Calu3 (cell line): ENCODE measurements at regions of chr18 and their contacts with region 1.

Region 1: GRCh38 chr18:61606759-61607158 is 273.5 kb downstream of the CDH20 start:
- DNase-seq: peak; percentile 49
- H3K4me3 Mint-ChIP-seq: no peak overlapping the region
- H3K27ac Mint-ChIP-seq: peak overlapping the region; percentile 2
- H3K4me1 Mint-ChIP-seq: peaks cover 9% of the 10 kb centered on the region
- H3K27me3 Mint-ChIP-seq: no peaks in the 10 kb centered on the region
- CTCF ChIP-seq: no peak

Region 2: GRCh38 chr18:61336766-61337165 is 270.0 kb before region 1 on chr18:
- CTCF ChIA-PET with region 1: no interaction called
- intact Hi-C with region 1: no loop called
- DNase-seq: no peak
- H3K4me3 Mint-ChIP-seq: no peak overlapping the region
- H3K27ac Mint-ChIP-seq: no peak overlapping the region
- H3K4me1 Mint-ChIP-seq: no peaks in the 10 kb centered on the region
- H3K27me3 Mint-ChIP-seq: peaks cover 14% of the 10 kb centered on the region
- CTCF ChIP-seq: no peak

Region 3: GRCh38 chr18:61551586-61551985 is 55.2 kb before region 1 on chr18:
- CTCF ChIA-PET with region 1: no interaction called
- intact Hi-C with region 1: no loop called
- DNase-seq: peak; percentile 66
- H3K4me3 Mint-ChIP-seq: no peak overlapping the region
- H3K27ac Mint-ChIP-seq: no peak overlapping the region
- H3K4me1 Mint-ChIP-seq: no peaks in the 10 kb centered on the region
- H3K27me3 Mint-ChIP-seq: no peaks in the 10 kb centered on the region
- CTCF ChIP-seq: peak; percentile 69

Region 4: GRCh38 chr18:61651883-61652268 is 45.1 kb after region 1 on chr18:
- CTCF ChIA-PET with region 1: no interaction called
- intact Hi-C with region 1: loop called (anchors 2 kb)
- DNase-seq: peak; percentile 2
- H3K4me3 Mint-ChIP-seq: no peak overlapping the region
- H3K27ac Mint-ChIP-seq: no peak overlapping the region
- H3K4me1 Mint-ChIP-seq: no peaks in the 10 kb centered on the region
- H3K27me3 Mint-ChIP-seq: peaks cover 5% of the 10 kb centered on the region
- CTCF ChIP-seq: no peak